A673 (cell line): ENCODE measurements at regions of chr11 and their contacts with region 1.

Region 1: DNA sequence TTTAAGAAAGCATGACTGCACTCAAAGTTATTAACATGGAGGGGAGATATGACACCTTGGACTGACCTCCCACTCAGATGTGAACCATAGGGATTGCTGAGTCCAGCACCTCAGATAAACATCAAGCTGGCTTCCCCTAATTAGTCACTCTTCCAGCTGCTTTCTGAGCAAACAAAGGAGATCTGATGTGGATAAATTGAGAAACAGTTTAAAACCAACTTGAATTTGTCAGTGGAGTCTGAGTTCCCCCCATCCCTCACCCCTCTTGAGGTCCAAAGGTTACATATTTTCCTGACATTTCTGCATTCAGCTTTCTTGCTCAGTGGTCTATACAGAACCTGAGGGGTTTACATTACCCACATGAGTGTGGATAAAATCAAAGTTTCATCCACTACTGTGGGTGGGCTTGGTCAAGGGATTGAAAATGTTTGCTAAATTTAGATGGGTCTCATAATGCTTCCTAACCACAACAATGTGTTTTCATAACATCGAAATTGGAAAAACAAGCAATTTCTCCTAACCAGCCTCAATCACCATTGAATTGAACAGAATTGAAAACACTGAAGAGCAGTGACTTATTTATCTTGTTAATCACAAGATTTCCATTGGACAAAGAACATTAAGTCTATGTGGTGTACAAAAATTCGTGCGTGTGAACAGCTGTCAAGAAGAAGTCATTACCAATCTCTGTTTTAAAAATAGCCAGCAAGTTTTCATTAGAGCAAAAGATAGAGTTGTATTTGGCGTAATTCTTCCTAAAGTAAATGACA is 292.3 kb downstream of the METTL15 start:
- DNase-seq: no peak
- H3K4me3 ChIP-seq: no peak overlapping the region
- H3K27ac ChIP-seq: no peak overlapping the region
- H3K4me1 ChIP-seq: no peaks in the 10 kb centered on the region
- H3K27me3 ChIP-seq: no peaks in the 10 kb centered on the region
- CTCF ChIP-seq: no peak

Region 2: DNA sequence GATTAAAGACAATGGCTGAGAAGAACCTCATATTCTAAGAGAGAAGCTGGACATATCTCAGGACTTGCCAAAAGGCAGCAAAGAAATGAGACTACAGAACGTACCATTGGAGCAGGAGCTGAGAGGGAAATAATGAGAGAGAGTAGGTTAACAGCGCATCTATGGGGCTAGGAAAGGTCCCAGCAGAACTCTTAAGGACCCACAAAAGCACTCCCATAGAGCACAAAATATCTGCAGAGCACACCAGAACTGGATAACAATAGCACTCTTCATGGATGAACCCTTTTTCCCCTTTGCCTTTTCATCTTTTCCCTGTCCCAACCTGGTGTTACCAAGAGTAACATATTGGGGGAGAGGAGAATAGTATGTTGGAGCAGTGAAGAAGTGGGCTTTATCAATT is 46.5 kb before region 1 on chr11:
- CTCF ChIA-PET with region 1: no interaction called
- POLR2A ChIA-PET with region 1: interaction called, 13 read pairs
- intact Hi-C with region 1: no loop called
- DNase-seq: no peak
- H3K4me3 ChIP-seq: no peak overlapping the region
- H3K27ac ChIP-seq: no peak overlapping the region
- H3K4me1 ChIP-seq: no peaks in the 10 kb centered on the region
- H3K27me3 ChIP-seq: no peaks in the 10 kb centered on the region
- CTCF ChIP-seq: no peak

Region 3: GRCh38 chr11:28366549-28367346 is 33.8 kb before region 1 on chr11:
- CTCF ChIA-PET with region 1: no interaction called
- POLR2A ChIA-PET with region 1: interaction called, 10 read pairs
- intact Hi-C with region 1: no loop called
- DNase-seq: no peak
- H3K4me3 ChIP-seq: no peak overlapping the region
- H3K27ac ChIP-seq: no peak overlapping the region
- H3K4me1 ChIP-seq: no peaks in the 10 kb centered on the region
- H3K27me3 ChIP-seq: no peaks in the 10 kb centered on the region
- CTCF ChIP-seq: no peak